AG04449 (cell line): ENCODE measurements at regions of chr7 and their contacts with region 1.

Region 1: GRCh38 chr7:143391462-143392404 is 10.6 kb downstream of the ZYX start:
- DNase-seq: no peak
- H3K4me3 ChIP-seq: no peak overlapping the region; the same call in 1 of the 2 replicates
- CTCF ChIP-seq: no peak

Region 2: GRCh38 chr7:143205560-143206293 is 186.0 kb before region 1 on chr7:
- CTCF ChIA-PET with region 1: no interaction called
- POLR2A ChIA-PET with region 1: no interaction called
- DNase-seq: no peak
- H3K4me3 ChIP-seq: no peak overlapping the region
- CTCF ChIP-seq: no peak

Region 3: DNA sequence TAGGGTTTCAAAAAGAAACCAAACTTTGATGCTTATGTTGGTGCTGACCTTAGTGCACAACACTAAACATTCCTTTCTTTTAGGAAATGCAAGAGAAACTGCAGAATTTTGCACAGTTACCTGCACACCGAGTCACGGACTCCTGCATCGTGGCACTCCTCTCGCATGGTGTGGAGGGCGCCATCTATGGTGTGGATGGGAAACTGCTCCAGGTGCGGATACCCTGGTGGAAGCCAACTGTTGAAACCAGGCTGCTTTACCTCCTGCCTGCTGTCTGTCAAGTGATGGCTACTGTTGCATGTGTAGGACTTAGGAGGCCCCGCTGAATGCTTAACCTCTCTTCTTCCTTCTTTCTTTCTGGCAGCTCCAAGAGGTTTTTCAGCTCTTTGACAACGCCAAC is 91.9 kb before region 1 on chr7:
- CTCF ChIA-PET with region 1: no interaction called
- POLR2A ChIA-PET with region 1: no interaction called
- DNase-seq: no peak
- H3K4me3 ChIP-seq: no peak overlapping the region
- CTCF ChIP-seq: peak; percentile 37

Region 4: DNA sequence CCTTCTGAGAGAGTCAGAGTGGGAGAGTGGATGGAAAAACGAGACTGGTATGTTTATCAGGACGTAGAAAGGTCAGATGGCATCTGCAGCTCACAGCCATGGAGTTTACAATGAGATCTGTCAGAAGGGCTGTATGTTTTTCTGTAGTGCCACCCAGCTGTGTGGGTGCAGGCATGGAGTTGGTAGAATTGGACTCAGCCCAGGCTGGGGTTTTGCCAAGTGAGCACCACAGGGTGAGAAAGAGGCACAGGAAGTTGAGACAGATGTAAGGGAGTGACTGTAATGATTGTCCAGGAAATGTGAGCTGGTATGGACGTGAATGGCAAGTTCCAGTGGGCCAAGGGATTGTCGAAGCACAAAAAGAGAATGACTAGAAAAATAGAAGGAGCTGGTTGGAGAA is 19.7 kb before region 1 on chr7:
- CTCF ChIA-PET with region 1: no interaction called
- POLR2A ChIA-PET with region 1: no interaction called
- DNase-seq: no peak
- H3K4me3 ChIP-seq: no peak overlapping the region
- CTCF ChIP-seq: no peak

Region 5: GRCh38 chr7:143408686-143409561 is 17.2 kb after region 1 on chr7 and contains the start of gene EPHA1:
- CTCF ChIA-PET with region 1: interaction called, 8 read pairs
- POLR2A ChIA-PET with region 1: interaction called, 29 read pairs
- DNase-seq: no peak
- H3K4me3 ChIP-seq: no peak within 1 kb of the TSS
- CTCF ChIP-seq: peak; percentile 4

Region 6: DNA sequence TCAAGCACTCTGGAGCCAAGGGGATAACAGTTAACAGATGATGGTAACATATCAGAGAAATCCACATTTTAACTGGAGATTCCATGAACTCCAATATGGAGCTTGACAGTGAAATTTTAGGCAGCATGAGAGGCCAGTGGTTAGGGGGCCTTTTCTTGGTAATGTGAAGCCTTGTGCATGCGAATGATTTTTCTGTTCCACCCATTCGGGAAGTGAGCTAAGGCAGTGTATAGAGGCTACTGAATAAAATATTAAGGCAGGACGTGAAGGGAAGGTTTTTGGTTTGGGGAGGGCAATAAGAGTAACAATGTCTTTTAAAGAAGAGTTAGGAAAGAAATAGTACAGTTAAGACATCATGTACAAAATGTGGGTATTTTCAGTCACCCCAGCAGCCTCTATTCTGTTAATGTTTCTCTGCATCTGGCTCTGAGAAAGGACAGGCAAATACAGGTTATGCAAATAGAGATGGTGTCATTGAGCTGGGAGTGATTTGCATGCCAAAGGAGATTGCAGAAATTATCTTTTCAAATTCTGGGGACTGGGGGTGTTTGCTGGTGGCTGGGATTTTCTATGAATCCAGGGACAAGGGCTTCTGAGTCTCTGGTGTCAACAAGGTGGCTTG is 44.7 kb after region 1 on chr7:
- CTCF ChIA-PET with region 1: no interaction called
- POLR2A ChIA-PET with region 1: no interaction called
- DNase-seq: no peak
- H3K4me3 ChIP-seq: no peak overlapping the region
- CTCF ChIP-seq: no peak